ENCODE measurements at regions of chr6 and their contacts with region 1.

Region 1: GRCh38 chr6:107318100-107318736 is 141.1 kb downstream of the PDSS2 start:
- DNase-seq: no peak
- ATAC-seq: peak; percentile 84

Region 2: DNA sequence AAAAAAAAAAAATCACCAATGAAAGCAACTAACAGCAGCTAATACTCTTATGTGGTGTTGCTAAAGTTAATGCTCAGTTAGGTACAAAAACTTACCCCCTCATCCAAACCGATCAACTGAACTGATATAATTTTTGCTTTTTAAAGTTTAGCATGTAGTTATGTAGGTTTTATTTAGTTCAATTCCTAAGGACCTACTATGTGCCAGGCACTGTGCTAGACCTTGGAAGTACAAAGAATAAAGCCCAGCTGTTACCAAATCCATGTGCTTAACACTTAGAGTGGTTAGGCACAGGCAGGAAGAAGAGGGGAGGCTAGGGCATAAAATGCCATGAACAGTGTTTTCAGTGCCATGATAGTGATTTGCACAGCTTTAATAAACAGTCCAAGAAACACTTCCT is 56.0 kb after region 1 on chr6:
- intact Hi-C with region 1: no loop called
- DNase-seq: no peak
- ATAC-seq: no peak

Region 3: DNA sequence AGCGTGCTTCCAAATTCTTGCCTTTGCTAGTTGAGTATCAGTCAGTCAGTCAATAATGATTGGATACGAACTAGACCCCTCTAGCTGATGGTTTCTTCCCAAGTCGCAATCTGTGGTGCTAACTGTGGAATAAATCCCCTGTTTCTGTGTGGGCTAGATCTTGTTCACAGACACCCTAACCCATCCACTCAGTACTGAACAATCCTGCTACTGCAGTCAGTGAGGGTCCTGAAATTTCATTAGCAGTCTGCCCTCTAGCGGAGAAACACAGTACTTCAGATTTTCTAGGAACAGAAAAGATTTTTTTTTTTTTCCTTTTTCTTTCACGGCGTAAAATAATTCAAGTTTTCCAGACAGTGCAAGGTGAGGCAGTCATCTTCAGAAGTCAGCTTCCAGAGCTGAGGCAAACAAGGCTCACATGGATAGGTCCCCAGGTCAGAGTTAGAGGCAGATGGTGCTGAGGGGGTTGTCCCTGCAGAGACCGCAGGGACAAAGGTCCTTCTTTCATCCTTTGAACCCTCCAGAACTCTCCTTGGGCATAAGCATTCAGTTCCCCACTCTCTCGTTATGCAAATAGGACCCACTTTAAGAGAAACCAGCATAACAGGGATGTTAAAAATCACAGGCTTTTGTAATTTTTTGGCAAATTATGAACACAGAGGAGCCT is 386.3 kb after region 1 on chr6:
- intact Hi-C with region 1: loop called (anchors 5 kb)
- DNase-seq: no peak
- ATAC-seq: no peak

Region 4: GRCh38 chr6:107847844-107848802 is 529.9 kb after region 1 on chr6:
- intact Hi-C with region 1: loop called (anchors 10 kb)
- DNase-seq: peak; percentile 93
- ATAC-seq: peak; percentile 94